PC-9 (cell line): ENCODE measurements at regions of chr14 and their contacts with region 1.

Region 1: GRCh38 chr14:42490536-42490935 is 883.9 kb downstream of the LRFN5 start:
- DNase-seq: no peak
- H3K4me3 ChIP-seq: no peak overlapping the region
- H3K27ac ChIP-seq: no peak overlapping the region
- H3K4me1 ChIP-seq: no peaks in the 10 kb centered on the region
- H3K27me3 ChIP-seq: no peaks in the 10 kb centered on the region
- CTCF ChIP-seq: no peak

Region 2: DNA sequence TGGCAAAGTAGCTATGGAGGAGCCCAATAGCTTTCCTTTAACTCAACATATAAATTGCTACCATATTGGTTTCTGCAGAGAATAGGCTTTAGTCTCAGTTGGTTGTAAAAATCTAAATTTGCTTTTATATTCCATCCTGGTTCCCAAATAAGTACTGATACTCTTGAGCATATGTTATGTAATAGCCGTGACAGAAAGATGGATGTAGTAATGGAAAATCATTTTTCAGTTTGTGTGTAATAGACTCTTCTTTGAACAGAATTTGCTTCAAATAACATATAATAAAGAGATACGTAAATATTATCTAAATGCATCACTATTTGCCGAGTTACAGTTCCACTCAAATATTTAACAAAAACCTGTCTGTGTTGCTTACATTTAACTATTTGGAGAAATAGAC is 612.2 kb before region 1 on chr14:
- CTCF ChIA-PET with region 1: no interaction called
- POLR2A ChIA-PET with region 1: interaction called, 49 read pairs
- intact Hi-C with region 1: no loop called
- DNase-seq: no peak
- H3K4me3 ChIP-seq: no peak overlapping the region
- H3K27ac ChIP-seq: no peak overlapping the region
- H3K4me1 ChIP-seq: no peaks in the 10 kb centered on the region
- H3K27me3 ChIP-seq: no peaks in the 10 kb centered on the region
- CTCF ChIP-seq: no peak

Region 3: GRCh38 chr14:42469637-42470426 is 20.7 kb before region 1 on chr14:
- CTCF ChIA-PET with region 1: no interaction called
- POLR2A ChIA-PET with region 1: no interaction called
- intact Hi-C with region 1: no loop called
- DNase-seq: no peak
- H3K4me3 ChIP-seq: no peak overlapping the region
- H3K27ac ChIP-seq: no peak overlapping the region
- H3K4me1 ChIP-seq: no peaks in the 10 kb centered on the region
- H3K27me3 ChIP-seq: no peaks in the 10 kb centered on the region
- CTCF ChIP-seq: no peak